ENCODE measurements at regions of chr15 and their contacts with region 1.

Region 1: DNA sequence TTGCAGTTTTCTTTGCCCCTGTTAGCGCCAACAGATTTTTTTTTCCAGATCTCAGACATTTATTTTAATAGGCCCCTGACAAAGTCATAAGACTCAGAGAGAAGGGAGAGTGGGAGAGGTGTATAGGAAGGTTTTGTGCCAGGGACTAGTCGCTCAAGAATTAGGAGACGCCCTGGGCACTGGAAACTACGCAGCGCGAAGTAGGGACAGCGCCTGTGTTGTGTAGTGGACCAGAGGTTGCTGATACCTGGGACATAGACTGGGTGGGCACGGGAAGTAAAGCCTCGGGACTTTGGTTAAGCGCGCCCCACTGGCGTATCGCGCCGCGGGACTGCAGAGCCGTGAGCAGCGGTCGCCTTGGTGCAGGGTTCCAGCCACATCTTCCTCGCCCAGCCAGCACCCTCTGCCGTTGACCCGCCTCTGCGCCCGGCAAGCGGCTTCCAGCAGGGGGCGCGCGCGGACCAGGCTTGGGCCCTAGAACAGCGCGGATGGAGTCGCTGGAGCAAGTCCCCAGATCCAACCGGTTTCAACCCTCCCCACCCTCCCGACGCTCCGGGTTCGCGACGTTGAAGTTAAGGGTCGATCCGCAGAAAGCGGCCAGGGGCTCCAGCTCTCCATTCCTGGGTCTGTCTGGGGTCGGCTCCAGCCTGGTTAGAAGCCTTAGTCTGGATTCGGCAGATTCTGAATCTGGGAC is 3.0 kb upstream of the ISLR2 start:
- DNase-seq: peak; percentile 82 to 91
- H3K4me3 ChIP-seq: peak overlapping the region; percentile 33 to 37
- H3K27ac ChIP-seq: no peak overlapping the region
- H3K4me1 ChIP-seq: peaks cover 0 to 38% (median 31%) of the 10 kb centered on the region in 4 donors
- H3K27me3 ChIP-seq: peaks cover 0 to 80% of the 10 kb centered on the region in 2 donors
- CTCF ChIP-seq: peak; percentile 98 to 99

Region 2: DNA sequence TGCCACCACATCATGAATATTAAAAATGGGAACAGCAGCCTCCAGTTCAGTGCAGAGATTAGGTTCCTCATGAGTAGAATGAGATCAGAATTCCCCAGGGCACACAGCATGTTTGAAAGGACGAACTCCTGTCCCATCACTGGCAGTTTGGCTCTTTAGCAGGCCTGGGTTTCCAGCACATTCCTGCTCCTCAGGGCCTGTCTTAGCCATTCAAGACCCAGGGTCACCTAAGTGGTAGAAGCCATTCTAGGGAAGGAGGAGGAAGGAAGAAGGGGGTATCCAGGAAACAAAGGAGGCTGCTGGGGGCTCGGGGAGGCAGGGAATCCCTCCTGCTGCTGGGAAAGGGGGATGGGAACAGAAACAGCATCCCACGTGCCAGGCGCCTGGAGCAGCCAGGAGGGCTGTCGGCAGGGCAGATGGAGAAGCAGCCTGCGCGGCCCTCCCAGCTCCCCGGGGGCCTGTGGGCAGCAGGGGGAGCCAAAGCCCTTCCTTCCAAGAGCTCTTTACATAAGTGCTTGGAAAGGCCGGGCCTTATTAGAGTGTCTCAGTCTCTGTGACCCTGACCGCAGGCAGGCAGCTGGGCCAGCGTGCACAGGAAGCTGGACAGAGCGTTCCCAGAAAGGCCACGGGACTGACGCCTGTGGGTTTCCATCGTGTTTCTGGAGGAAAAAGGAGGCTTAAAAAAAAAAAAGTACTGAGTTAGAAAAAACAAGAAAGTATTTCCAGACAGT is 176.4 kb before region 1 on chr15:
- intact Hi-C with region 1: no loop called
- DNase-seq: peak; percentile 98 to 99
- H3K4me3 ChIP-seq: no peak overlapping the region
- H3K27ac ChIP-seq: peak overlapping the region; percentile 95 to 97
- H3K4me1 ChIP-seq: peaks cover 15 to 40% (median 27%) of the 10 kb centered on the region in 4 donors
- H3K27me3 ChIP-seq: no peaks in the 10 kb centered on the region
- CTCF ChIP-seq: peak; percentile 75 to 90

Region 3: DNA sequence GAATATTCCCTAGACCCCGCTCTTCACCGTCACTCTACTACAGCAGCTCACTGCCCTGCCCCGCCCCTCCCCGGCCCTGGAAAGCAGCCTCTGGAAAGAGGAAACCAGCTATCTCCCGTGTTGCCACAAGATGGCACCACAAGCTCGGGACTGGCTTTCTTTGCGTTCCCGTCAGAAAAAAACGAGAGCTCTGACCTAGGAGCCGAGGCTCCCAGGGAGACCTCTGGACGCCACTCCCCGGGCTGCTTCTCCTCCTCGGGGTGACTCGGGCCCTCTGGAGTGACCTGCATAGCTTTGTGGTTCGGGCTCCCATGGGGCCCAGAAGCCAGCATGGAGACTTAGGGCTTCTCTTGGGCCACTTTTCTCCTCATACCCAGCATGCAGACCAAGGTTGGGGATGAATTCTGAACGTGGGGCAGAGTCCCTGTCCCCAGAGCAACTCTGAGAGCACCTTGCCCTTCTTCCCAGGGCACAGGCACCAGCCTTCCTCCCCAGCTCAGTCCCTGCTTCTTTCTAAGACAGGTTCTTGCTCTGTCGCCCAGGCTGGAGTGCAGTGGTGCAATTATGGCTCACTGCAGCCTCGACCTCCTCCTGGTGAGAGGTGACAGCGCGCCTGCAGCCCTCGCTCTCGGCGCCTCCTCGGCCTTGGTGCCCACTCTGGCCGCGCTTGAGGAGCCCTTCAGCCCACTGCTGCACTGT is 154.3 kb before region 1 on chr15:
- intact Hi-C with region 1: loop called (anchors 10 kb)
- DNase-seq: peak; percentile 84 to 88
- H3K4me3 ChIP-seq: no peak overlapping the region
- H3K27ac ChIP-seq: no peak overlapping the region
- H3K4me1 ChIP-seq: peaks cover 0 to 13% (median 5%) of the 10 kb centered on the region in 4 donors
- H3K27me3 ChIP-seq: no peaks in the 10 kb centered on the region
- CTCF ChIP-seq: peak; percentile 88 to 93

Region 4: GRCh38 chr15:74044267-74045110 is 82.9 kb before region 1 on chr15:
- intact Hi-C with region 1: loop called (anchors 5 kb)
- DNase-seq: peak; percentile 64 to 78
- H3K4me3 ChIP-seq: no peak overlapping the region
- H3K27ac ChIP-seq: peak overlapping the region; percentile 18 to 40
- H3K4me1 ChIP-seq: peaks cover 4 to 40% (median 15%) of the 10 kb centered on the region in 4 donors
- H3K27me3 ChIP-seq: no peaks in the 10 kb centered on the region
- CTCF ChIP-seq: no peak

Region 5: GRCh38 chr15:74307827-74308644 is 180.6 kb after region 1 on chr15:
- intact Hi-C with region 1: loop called (anchors 5 kb)
- DNase-seq: peak; percentile 34 to 76
- H3K4me3 ChIP-seq: no peak overlapping the region
- H3K27ac ChIP-seq: no peak overlapping the region
- H3K4me1 ChIP-seq: no peaks in the 10 kb centered on the region
- H3K27me3 ChIP-seq: peaks cover 0 to 56% of the 10 kb centered on the region in 2 donors
- CTCF ChIP-seq: peak; percentile 63 to 75

Region 6: GRCh38 chr15:74322181-74323076 is 195.0 kb after region 1 on chr15:
- intact Hi-C with region 1: loop called (anchors 5 kb)
- DNase-seq: peak; percentile 69 to 79
- H3K4me3 ChIP-seq: no peak overlapping the region
- H3K27ac ChIP-seq: no peak overlapping the region
- H3K4me1 ChIP-seq: peaks cover 0 to 31% (median 18%) of the 10 kb centered on the region in 4 donors
- H3K27me3 ChIP-seq: peaks cover 0 to 4% of the 10 kb centered on the region in 2 donors
- CTCF ChIP-seq: peak; percentile 78 to 87